ENCODE measurements at regions of chr9 and their contacts with region 1.

Region 1: GRCh38 chr9:15485836-15486666 is 24.7 kb downstream of the PSIP1 start:
- DNase-seq: no peak
- H3K4me3 Mint-ChIP-seq: no peak overlapping the region
- H3K27ac Mint-ChIP-seq: peak overlapping the region; percentile 23
- H3K4me1 Mint-ChIP-seq: peaks cover 20% of the 10 kb centered on the region
- H3K27me3 Mint-ChIP-seq: no peaks in the 10 kb centered on the region

Region 2: GRCh38 chr9:15468145-15468544 is 17.9 kb before region 1 on chr9:
- intact Hi-C with region 1: loop called (anchors 2 kb)
- DNase-seq: no peak
- H3K4me3 Mint-ChIP-seq: no peak overlapping the region
- H3K27ac Mint-ChIP-seq: no peak overlapping the region
- H3K4me1 Mint-ChIP-seq: peaks cover 9% of the 10 kb centered on the region
- H3K27me3 Mint-ChIP-seq: no peaks in the 10 kb centered on the region